ENCODE measurements at regions of chr6 and their contacts with region 1.

Region 1: GRCh38 chr6:150016324-150017185 is 8.8 kb downstream of the RAET1L start:
- DNase-seq: peak; percentile 15
- H3K4me3 ChIP-seq: no peak overlapping the region
- H3K27ac ChIP-seq: no peak overlapping the region
- H3K27me3 ChIP-seq: peaks cover 57% of the 10 kb centered on the region
- CTCF ChIP-seq: peak; percentile 56

Region 2: DNA sequence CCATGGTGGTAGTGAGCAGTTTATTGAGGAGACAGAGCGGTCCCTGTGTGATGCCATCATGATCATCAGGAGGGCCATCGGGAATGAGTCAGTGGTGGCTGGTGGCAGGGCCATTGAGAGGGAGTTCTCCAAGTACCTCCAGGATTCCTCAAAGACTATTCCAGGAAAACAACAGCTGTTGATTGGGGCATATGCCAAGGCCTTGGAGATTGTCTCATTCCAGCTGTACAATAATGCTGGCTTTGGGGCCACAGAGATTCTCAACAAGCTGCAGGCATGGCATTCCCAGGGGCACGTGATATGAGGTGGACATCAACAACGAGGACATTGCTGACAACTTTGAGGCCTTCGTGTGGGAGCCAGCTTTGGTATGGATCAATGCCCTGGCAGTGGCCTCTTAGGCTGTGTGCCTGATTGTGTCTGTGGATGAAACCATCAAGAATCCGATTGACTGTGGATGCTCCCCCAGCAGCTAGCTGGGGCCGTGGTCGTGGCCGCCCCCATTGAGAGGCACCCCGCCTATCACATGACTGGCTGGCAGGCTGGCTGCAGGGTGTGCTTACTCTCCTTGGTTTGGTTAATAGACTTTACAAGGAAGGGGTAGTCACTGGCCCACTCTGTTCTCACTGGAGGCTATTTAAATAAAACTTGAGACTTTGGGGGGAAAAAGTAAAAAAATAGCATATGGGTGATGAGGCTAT is 135.3 kb before region 1 on chr6:
- CTCF ChIA-PET with region 1: no interaction called
- POLR2A ChIA-PET with region 1: no interaction called
- DNase-seq: no peak
- H3K4me3 ChIP-seq: no peak overlapping the region
- H3K27ac ChIP-seq: no peak overlapping the region
- H3K27me3 ChIP-seq: peaks cover 16% of the 10 kb centered on the region
- CTCF ChIP-seq: no peak

Region 3: DNA sequence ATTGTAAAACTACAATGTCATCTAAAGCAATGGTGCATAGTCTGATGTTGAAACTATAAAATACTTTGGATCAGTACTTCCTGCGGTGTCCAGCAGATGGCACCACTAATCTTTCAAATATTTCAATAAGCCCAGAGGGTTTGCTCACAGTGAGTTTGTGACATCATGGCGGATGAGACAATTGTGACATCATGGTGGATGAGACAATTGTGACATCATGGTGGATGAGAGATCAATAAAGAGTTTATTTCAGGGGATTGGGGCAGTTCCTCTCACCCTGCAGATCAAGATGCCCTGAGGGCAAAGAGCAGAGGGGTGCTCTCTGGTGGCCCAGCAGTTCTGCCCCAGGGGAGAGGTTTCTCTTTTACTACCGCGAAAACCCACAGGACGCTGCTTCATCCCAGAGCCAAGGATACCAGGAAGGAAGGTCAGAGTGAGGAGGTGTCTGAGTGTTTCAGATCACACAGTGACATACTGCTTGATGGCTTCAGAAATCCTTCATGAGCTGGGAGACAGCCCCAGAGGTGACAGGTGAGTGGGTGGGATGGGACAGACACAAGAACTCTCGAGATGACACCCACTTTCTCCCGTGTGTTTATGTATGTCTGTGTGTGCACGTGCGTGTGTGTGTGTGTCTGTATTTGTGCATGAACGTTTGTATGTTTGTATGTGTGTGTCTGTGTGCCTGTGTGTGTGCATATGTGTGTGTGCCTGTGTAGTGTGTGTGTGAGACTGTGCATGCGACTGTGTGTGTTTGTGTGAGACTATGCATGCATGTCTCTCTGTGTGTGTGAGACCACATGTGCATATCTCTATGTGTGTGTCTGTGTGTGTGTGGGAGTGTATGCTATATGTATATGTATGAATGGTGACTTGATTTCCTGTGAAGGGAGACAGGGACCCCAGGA is 82.1 kb before region 1 on chr6:
- CTCF ChIA-PET with region 1: interaction called, 18 read pairs
- POLR2A ChIA-PET with region 1: no interaction called
- DNase-seq: peak; percentile 39
- H3K4me3 ChIP-seq: no peak overlapping the region
- H3K27ac ChIP-seq: no peak overlapping the region
- H3K27me3 ChIP-seq: peaks cover 60% of the 10 kb centered on the region
- CTCF ChIP-seq: peak; percentile 65